ENCODE measurements at regions of chr7 and their contacts with region 1.

Region 1: GRCh38 chr7:12139409-12139808 is 71.7 kb upstream of the TMEM106B start:
- DNase-seq: no peak
- H3K4me3 ChIP-seq: no peak overlapping the region
- H3K27ac ChIP-seq: no peak overlapping the region
- H3K4me1 ChIP-seq: no peaks in the 10 kb centered on the region
- H3K27me3 ChIP-seq: no peaks in the 10 kb centered on the region
- CTCF ChIP-seq: no peak
- EP300 ChIP-seq: no peak
- RAD21 ChIP-seq: no peak

Region 2: GRCh38 chr7:12119620-12120303 is 19.6 kb before region 1 on chr7:
- CTCF ChIA-PET with region 1: interaction called, 11 read pairs
- POLR2A ChIA-PET with region 1: no interaction called
- DNase-seq: peak; percentile 8
- H3K4me3 ChIP-seq: no peak overlapping the region
- H3K27ac ChIP-seq: no peak overlapping the region
- H3K4me1 ChIP-seq: no peaks in the 10 kb centered on the region; a peak in 2 of 4 replicates
- H3K27me3 ChIP-seq: no peaks in the 10 kb centered on the region
- CTCF ChIP-seq: no peak
- EP300 ChIP-seq: no peak
- RAD21 ChIP-seq: no peak

Region 3: GRCh38 chr7:12162415-12163113 is 23.2 kb after region 1 on chr7:
- CTCF ChIA-PET with region 1: no interaction called
- POLR2A ChIA-PET with region 1: no interaction called
- DNase-seq: no peak
- H3K4me3 ChIP-seq: no peak overlapping the region
- H3K27ac ChIP-seq: no peak overlapping the region
- H3K4me1 ChIP-seq: no peaks in the 10 kb centered on the region
- H3K27me3 ChIP-seq: no peaks in the 10 kb centered on the region
- CTCF ChIP-seq: no peak
- EP300 ChIP-seq: no peak
- RAD21 ChIP-seq: no peak

Measured in SK-N-SH (cell line).